ENCODE measurements at regions of chr9 and their contacts with region 1.

Region 1: GRCh38 chr9:71984403-71984802 is 73.0 kb downstream of the C9orf85 start:
- DNase-seq: peak; percentile 53 to 64
- ATAC-seq: peak; percentile 77 to 96 (median 92)
- H3K4me3 ChIP-seq: no peak overlapping the region
- H3K27ac ChIP-seq: peak overlapping the region in 1 of 10 donors; percentile 19
- H3K4me1 ChIP-seq: peaks cover 3 to 19% (median 13%) of the 10 kb centered on the region in 9 donors
- H3K27me3 ChIP-seq: no peaks in the 10 kb centered on the region
- CTCF ChIP-seq: no peak

Region 2: DNA sequence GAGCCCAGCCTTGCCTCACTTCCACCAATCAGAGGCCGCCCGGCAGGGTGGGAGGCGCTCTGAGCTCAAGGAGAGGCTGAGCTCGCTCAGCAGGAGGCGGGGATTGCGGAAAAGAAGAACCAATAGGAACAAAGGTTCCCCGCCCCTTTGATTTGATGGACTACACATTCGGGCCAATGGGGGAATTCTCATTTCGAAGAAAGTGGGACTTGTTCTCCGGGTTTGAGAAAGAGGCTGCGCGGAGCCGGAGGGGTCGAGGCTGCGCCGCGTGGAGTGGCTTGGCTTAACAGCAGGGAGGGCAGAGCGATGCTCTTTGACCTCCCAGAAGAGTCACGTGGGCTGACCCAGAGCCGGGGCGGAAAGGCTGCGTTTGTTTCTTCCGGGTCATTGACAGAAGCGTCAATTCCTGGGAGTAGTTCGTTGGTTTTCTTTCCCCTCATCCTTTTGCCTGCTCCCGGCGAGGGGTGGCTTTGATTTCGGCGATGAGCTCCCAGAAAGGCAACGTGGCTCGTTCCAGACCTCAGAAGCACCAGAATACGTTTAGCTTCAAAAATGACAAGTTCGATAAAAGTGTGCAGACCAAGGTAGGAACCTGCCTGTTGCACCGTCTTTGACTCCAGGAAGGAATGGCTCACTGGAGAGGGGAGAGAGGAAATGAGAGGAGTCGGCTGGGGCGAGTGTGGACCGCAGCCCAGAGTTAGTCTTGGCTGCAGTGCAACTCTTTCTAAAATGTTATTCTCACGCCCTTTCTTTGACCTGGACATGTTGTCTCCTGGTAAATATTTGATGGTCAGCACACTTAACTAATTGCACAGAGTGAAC is 72.9 kb before region 1 on chr9 and contains the start of gene C9orf85:
- intact Hi-C with region 1: loop called in 1 of 10 experiments (anchors 10 kb)
- DNase-seq: peak; percentile 98 to 99
- ATAC-seq: peak; percentile 98 to 100 (median 99)
- H3K4me3 ChIP-seq: peak within 1 kb of the TSS; percentile 64 to 99 (median 94)
- H3K27ac ChIP-seq: peak within 1 kb of the TSS; percentile 82 to 98 (median 94)
- H3K4me1 ChIP-seq: peaks cover 0 to 63% (median 46%) of the 10 kb centered on the region in 9 donors
- H3K27me3 ChIP-seq: no peaks in the 10 kb centered on the region
- CTCF ChIP-seq: no peak
- total RNA-seq, gene C9orf85: 3.8 to 8.5 (median 6.1) TPM

Region 3: GRCh38 chr9:72364679-72365524 is 380.5 kb after region 1 on chr9 and contains the start of gene ZFAND5:
- intact Hi-C with region 1: no loop called
- DNase-seq: peak; percentile 98 to 99
- ATAC-seq: peak; percentile 90 to 99 (median 95)
- H3K4me3 ChIP-seq: peak within 1 kb of the TSS; percentile 63 to 94 (median 88)
- H3K27ac ChIP-seq: peak within 1 kb of the TSS; percentile 98 to 100 (median 100)
- H3K4me1 ChIP-seq: peaks cover under 1 to 49% (median 34%) of the 10 kb centered on the region in 9 donors
- H3K27me3 ChIP-seq: no peaks in the 10 kb centered on the region
- CTCF ChIP-seq: peak in 2 of 9 donors; percentile 10 to 17
- total RNA-seq, gene ZFAND5: 158 to 280 (median 230) TPM

Measured in heart right ventricle (tissue), 16 donors.